AG04450 (cell line): ENCODE measurements at regions of chr10 and their contacts with region 1.

Region 1: DNA sequence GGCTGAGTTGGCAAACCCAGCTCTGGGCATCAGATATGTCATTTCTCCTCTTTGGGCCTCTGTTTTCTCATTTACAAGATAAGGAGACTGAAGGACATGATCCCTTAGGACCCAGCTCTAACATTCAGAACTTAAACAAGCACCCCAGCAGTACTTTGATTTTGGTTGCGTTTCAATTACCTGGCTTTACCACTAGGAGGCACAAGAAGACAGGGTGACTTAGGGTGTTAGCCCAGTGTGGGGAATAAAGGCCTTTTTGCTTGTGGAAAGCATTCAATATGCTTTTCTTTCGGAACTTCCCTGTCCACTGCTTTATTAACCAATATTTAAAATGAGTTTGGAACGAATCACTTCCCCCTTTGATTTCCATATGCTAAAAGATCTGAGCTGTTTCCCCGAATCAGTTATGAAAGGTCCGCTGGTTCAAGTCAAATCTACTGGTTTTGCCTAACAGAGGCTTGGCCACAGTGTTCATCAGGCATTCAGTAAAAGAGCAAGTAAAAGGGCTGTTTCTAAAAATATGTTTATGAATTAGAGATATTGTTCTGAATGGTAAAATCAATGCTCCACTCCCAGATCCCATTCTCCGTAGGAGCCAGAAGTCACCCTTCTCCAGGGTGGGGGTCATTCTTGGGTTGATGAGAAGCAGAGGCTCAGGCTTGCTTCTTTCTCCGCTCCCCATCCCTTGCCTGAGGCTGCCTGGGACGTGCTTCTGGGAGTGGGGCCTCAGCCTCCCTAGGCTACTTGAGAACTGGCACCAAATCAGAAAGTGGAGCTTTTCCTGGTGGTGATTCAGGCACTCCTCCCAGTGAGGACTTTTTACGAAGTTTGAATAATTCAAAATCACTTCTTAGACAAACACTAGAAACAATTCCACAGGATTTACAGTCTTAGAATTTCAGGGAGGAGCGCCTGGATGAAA is 105.5 kb downstream of the MYOF start:
- DNase-seq: peak; percentile 74
- H3K4me3 ChIP-seq: peak overlapping the region; percentile 12; the same call in 1 of the 2 replicates
- H3K27ac ChIP-seq: peak overlapping the region; percentile 77
- H3K27me3 ChIP-seq: no peaks in the 10 kb centered on the region
- CTCF ChIP-seq: peak; percentile 96

Region 2: GRCh38 chr10:92857904-92858514 is 518.6 kb before region 1 on chr10:
- CTCF ChIA-PET with region 1: no interaction called
- POLR2A ChIA-PET with region 1: no interaction called
- DNase-seq: no peak
- H3K4me3 ChIP-seq: no peak overlapping the region
- H3K27ac ChIP-seq: no peak overlapping the region
- H3K27me3 ChIP-seq: no peaks in the 10 kb centered on the region
- CTCF ChIP-seq: no peak

Region 3: GRCh38 chr10:93352638-93353383 is 23.8 kb before region 1 on chr10:
- CTCF ChIA-PET with region 1: interaction called, 24 read pairs
- POLR2A ChIA-PET with region 1: no interaction called
- DNase-seq: no peak
- H3K4me3 ChIP-seq: no peak overlapping the region
- H3K27ac ChIP-seq: no peak overlapping the region
- H3K27me3 ChIP-seq: no peaks in the 10 kb centered on the region
- CTCF ChIP-seq: peak; percentile 57

Region 4: DNA sequence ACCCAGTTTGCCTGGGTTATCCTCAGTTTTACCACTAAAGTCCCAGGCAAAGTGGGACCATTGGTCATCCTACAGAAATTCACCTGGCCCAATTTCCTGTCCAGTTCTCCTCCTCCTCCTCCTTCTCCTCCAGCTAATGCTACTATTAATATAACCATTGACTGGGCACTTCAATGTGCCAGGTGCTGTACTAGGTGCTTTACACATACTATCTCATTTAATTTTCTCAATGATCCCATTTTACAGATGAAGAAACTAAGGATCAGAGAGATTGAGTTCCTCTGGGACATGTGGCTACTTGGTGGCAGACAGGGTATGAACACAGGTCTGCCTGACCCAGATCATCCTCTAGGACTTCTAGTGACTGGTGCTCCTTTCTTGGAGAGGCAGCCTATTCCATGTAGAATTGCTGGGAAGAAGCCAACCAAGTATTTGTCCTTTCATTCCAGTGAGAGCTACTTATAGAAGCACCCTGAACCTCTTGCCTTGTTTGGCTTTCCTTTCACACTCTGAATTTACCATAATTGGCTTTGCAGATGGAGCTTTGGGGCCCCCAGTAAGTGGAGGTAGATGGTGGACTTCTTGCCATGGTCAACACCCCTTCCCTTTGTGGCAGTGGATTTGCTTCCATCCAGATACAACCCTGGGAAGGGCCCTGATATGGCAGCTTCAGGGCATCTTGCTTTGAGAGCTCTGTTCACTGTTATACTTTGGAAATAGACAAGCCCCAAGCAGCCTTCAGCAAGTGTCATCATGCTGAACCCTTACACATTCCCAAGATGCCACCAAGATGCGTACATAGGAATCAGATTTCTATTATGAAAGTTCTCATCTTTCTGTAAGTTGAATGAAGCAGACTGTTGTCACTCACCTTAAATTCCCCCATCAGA is 26.8 kb after region 1 on chr10:
- CTCF ChIA-PET with region 1: interaction called, 29 read pairs
- POLR2A ChIA-PET with region 1: no interaction called
- DNase-seq: no peak
- H3K4me3 ChIP-seq: no peak overlapping the region
- H3K27ac ChIP-seq: no peak overlapping the region
- H3K27me3 ChIP-seq: no peaks in the 10 kb centered on the region
- CTCF ChIP-seq: no peak

Region 5: DNA sequence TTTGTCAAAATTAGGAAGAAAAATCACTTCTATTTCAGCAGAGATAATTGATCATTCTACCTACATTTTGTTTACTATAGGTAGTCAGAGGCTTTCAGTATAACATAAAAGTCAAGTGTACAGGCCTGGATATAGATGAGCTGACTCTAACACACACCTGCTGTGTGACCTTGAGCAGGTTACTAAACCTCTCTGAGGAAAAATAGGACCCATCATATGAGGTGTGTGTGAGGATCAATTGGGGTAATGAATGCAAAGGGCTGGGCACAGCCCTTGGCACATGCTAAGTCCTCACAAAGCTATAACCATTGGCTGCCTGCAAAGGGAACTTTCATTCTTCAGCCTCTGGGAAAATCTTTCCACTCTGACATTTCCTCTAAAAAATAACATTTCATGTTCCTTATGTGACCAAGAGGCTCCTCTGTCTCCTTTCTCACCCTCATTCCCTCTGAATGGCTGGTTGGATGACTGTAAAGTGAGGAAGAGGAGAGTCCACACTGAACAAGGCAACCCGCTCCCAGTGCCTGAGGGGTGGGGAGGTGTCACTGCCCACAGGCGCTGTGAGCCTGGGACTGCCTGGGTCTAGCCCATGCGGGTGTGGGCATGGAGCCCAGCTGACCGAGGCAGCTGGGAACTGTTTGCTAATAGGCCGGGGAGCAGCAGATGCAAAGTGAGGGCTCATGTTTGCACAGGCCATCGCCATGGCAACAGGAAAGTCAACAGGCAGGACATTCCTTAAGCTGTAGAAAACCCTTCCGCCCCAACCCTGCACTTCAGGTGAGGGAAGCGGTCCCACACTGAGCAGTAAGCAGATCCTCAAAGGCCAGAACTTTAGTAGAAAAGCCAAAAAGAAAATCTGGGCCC is 68.7 kb after region 1 on chr10:
- CTCF ChIA-PET with region 1: interaction called, 26 read pairs
- POLR2A ChIA-PET with region 1: interaction called, 6 read pairs
- DNase-seq: peak; percentile 93
- H3K4me3 ChIP-seq: no peak overlapping the region
- H3K27ac ChIP-seq: peak overlapping the region; percentile 85
- H3K27me3 ChIP-seq: no peaks in the 10 kb centered on the region
- CTCF ChIP-seq: no peak

Region 6: DNA sequence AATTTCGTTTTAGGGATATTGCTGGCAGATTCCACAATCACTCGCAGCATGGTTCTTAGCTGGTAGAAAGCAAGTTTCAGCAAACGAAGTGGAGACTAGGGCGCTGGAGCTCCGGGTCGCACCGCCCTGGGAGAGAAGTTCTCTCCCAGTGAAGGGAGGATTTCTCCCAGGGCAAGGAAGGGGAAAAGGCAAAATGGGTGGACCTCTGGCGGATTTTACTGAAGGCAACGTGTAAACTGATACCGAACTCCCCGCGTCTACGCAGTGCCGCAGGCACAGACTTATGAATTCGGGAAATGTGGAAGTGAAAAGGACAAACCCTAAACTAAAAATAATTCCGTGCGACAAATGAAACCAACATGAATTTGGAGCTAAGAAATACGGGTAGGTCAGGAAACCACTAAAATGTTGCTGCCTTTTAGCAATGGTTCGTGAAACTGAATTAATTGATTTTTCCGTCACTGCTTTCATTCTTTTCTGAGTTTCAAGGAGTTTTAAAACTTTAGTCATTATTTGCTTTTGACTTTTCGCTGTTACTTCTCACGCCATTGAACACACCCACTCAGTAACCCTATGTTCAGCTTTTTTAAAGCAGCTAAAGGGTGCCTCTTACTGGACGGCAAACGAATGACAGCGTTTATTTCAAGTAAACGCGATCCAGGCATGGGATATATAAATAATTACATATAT is 105.7 kb after region 1 on chr10 and contains the start of gene MYOF:
- CTCF ChIA-PET with region 1: interaction called, 473 read pairs
- POLR2A ChIA-PET with region 1: interaction called, 35 read pairs
- DNase-seq: peak; percentile 78
- H3K4me3 ChIP-seq: peak within 1 kb of the TSS; percentile 90
- H3K27ac ChIP-seq: peak within 1 kb of the TSS; percentile 97
- H3K27me3 ChIP-seq: no peaks in the 10 kb centered on the region
- CTCF ChIP-seq: peak; percentile 62
- polyA plus RNA-seq, gene MYOF: 254 and 275 TPM in 2 replicates

Region 7: GRCh38 chr10:93515071-93516005 is 138.7 kb after region 1 on chr10:
- CTCF ChIA-PET with region 1: interaction called, 127 read pairs
- POLR2A ChIA-PET with region 1: no interaction called
- DNase-seq: no peak
- H3K4me3 ChIP-seq: no peak overlapping the region
- H3K27ac ChIP-seq: no peak overlapping the region
- H3K27me3 ChIP-seq: no peaks in the 10 kb centered on the region
- CTCF ChIP-seq: no peak